Mucosa of descending colon (tissue), 3 donors: ENCODE measurements at regions of chr22 and their contacts with region 1.

Region 1: GRCh38 chr22:27011133-27011532 is 353.7 kb downstream of the MIAT start:
- DNase-seq: no peak
- ATAC-seq: no peak
- H3K4me3 ChIP-seq: no peak overlapping the region
- H3K4me1 ChIP-seq: no peaks in the 10 kb centered on the region
- CTCF ChIP-seq: no peak

Region 2: DNA sequence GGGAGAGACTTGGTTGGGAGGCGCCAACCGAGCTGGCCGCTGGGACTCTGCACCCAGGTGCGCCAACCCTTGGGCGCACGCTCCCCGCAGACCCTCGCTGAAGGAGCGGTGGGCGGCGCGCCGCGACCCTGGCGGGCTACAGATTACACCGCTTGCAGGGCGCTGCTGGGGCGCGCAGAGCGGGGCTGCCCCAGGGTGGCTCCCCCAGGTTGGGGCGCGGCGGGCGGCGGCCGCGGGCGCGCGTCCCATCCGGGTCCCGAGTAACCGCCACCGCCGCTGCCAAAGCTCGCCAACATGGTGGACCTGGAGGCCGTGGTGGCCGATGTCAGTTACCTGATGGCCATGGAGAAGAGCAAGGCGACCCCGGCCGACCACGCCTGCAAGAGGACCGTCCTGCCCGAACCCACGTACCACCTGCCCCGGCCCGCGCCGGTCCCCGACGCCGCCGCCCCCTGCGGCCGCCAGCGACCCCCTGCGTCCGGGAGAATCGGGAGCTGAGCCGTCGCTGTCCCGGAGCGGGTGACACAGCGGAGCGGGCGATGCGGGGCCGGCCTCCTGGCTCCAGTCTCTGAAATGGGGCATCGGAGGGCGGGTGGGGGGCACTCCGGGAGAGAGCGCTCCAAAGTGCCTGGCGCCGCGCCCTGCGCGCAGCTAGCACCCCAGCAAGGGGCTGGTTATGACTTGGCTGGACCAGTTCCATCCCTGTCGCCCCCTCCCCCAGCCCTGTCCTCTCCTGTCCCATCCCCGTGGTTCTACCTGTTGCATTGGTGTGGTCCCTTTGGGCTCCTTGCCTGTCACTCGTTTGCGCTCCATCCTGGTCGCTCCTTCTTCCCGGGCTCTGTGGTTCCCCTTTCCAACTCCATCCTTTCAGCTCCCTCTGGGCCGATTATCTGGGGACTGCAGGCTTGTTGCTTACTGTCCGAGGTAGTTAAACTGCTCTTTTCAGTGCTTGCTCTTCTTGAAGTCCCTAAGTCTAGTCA is 1589.9 kb before region 1 on chr22:
- intact Hi-C with region 1: loop called in 1 of 2 experiments (anchors 5 kb)
- DNase-seq: peak in 2 of 3 donors; percentile 31 to 66
- ATAC-seq: peak; percentile 70
- H3K4me3 ChIP-seq: no peak overlapping the region
- H3K4me1 ChIP-seq: peaks cover 26% of the 10 kb centered on the region
- CTCF ChIP-seq: no peak